Colonic mucosa (tissue), 4 donors: ENCODE measurements at regions of chrX and their contacts with region 1.

Region 1: GRCh38 chrX:100895365-100896075 is 21.4 kb upstream of the NOX1 start:
- DNase-seq: no peak
- H3K4me3 ChIP-seq: no peak overlapping the region
- H3K27ac ChIP-seq: no peak overlapping the region
- H3K4me1 ChIP-seq: no peaks in the 10 kb centered on the region
- H3K27me3 ChIP-seq: no peaks in the 10 kb centered on the region
- CTCF ChIP-seq: peak; percentile 16

Region 2: GRCh38 chrX:101206471-101206870 is 311.0 kb after region 1 on chrX:
- intact Hi-C with region 1: loop called (anchors 10 kb)
- DNase-seq: no peak
- H3K4me3 ChIP-seq: no peak overlapping the region
- H3K27ac ChIP-seq: no peak overlapping the region
- H3K4me1 ChIP-seq: no peaks in the 10 kb centered on the region
- H3K27me3 ChIP-seq: no peaks in the 10 kb centered on the region
- CTCF ChIP-seq: no peak